Right lobe of liver (tissue), 6 donors: ENCODE measurements at regions of chr18 and their contacts with region 1.

Region 1: DNA sequence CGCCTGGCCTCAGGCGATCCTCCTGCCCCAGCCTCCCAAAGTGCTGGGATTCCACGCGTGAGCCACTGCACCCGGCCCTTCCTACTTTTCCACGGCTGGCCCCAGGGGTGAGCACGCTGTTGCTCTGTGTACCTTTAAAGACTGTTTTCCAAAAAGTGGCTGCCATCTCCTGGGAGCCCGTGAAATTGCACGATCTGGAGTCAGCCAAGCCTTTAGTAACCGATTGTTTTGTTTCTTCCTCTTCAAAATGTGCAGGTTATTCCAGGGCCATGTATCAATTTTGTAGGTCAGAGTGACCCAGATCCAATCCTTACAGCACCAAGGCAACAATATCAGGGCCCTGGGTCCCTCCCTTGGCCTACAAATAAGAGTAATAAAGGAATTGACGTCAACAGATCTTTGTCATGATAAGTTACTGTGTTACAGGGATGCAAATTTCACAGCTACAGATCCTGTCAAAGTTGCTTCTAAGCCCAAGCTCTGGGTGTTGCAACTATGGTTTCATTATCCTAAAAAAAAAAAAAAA is 135.6 kb upstream of the ZNF236 start:
- DNase-seq: peak; percentile 47 to 66 (median 58)
- ATAC-seq: peak; percentile 91 to 97 (median 95)
- H3K4me3 ChIP-seq: no peak overlapping the region
- H3K27ac ChIP-seq: no peak overlapping the region
- H3K4me1 ChIP-seq: no peaks in the 10 kb centered on the region
- H3K27me3 ChIP-seq: no peaks in the 10 kb centered on the region
- CTCF ChIP-seq: peak; percentile 62 to 68 (median 67)
- POLR2A ChIP-seq: no peak

Region 2: GRCh38 chr18:76398896-76399612 is 287.7 kb before region 1 on chr18:
- intact Hi-C with region 1: loop called (anchors 5 kb)
- DNase-seq: peak; percentile 82 to 85 (median 85)
- ATAC-seq: peak; percentile 98 to 99 (median 98)
- H3K4me3 ChIP-seq: no peak overlapping the region
- H3K27ac ChIP-seq: no peak overlapping the region
- H3K4me1 ChIP-seq: peaks cover 0 to 4% (median 0%) of the 10 kb centered on the region in 4 donors
- H3K27me3 ChIP-seq: no peaks in the 10 kb centered on the region
- CTCF ChIP-seq: peak; percentile 92 to 98 (median 94)
- POLR2A ChIP-seq: no peak